Endothelial cell of umbilical vein (primary cell): ENCODE measurements at regions of chr5 and their contacts with region 1.

Region 1: GRCh38 chr5:147369742-147370374 is 135.0 kb downstream of the STK32A start:
- DNase-seq: peak; percentile 47
- H3K4me3 ChIP-seq: no peak overlapping the region
- H3K27ac ChIP-seq: no peak overlapping the region
- H3K4me1 ChIP-seq: peaks cover 8% of the 10 kb centered on the region
- H3K27me3 ChIP-seq: peaks cover 2 to 11% of the 10 kb centered on the region in 2 experiments
- CTCF ChIP-seq: peak; percentile 41 to 42
- POLR2A ChIP-seq: no peak

Region 2: GRCh38 chr5:147098233-147098790 is 271.5 kb before region 1 on chr5:
- CTCF ChIA-PET with region 1: interaction called, 100 read pairs
- POLR2A ChIA-PET with region 1: no interaction called
- dilution Hi-C with region 1: no loop called
- intact Hi-C with region 1: loop called (anchors 1 kb)
- DNase-seq: peak; percentile 23
- H3K4me3 ChIP-seq: no peak overlapping the region
- H3K27ac ChIP-seq: no peak overlapping the region
- H3K4me1 ChIP-seq: no peaks in the 10 kb centered on the region
- H3K27me3 ChIP-seq: no peaks in the 10 kb centered on the region
- CTCF ChIP-seq: peak; percentile 51 to 54
- POLR2A ChIP-seq: no peak

Region 3: GRCh38 chr5:147223948-147224791 is 145.7 kb before region 1 on chr5:
- CTCF ChIA-PET with region 1: interaction called, 234 read pairs
- POLR2A ChIA-PET with region 1: no interaction called
- dilution Hi-C with region 1: no loop called
- intact Hi-C with region 1: loop called (anchors 1 kb)
- DNase-seq: peak; percentile 60
- H3K4me3 ChIP-seq: no peak overlapping the region
- H3K27ac ChIP-seq: no peak overlapping the region
- H3K4me1 ChIP-seq: no peaks in the 10 kb centered on the region
- H3K27me3 ChIP-seq: peaks cover 4% of the 10 kb centered on the region in 2 experiments
- CTCF ChIP-seq: peak; percentile 44 to 64
- POLR2A ChIP-seq: no peak

Region 4: DNA sequence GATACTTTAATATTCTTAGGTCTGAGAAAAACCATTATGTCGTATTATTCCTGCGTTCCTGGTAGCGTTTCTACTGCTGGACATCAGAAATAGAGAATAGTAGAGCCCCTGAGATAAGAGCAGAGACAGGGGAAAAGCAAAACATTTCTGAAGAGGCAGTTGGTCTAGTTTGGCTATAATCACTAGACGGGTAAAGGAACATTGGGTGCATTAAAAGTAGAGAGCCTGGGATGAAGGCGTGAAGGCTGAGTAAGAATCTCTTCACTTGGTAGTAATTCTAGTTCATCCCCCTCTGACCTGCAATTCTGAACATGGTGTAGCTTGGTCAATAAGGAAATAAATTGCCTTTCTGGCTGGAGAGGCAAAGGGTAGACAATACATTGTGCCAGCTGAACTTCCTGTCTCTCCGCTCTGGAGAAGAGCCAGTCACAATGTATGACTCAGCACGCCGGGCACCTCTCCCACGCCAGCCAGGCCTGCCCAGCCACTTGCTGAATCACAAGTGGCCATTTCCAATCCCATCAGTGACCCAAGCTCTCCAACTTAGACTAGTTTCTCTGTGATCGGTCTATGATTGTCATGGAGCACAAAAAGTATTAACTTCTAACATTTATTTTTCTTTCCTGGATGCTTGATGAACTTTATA is 59.7 kb before region 1 on chr5:
- CTCF ChIA-PET with region 1: interaction called, 5 read pairs
- POLR2A ChIA-PET with region 1: no interaction called
- dilution Hi-C with region 1: no loop called
- intact Hi-C with region 1: loop called (anchors 2 kb)
- DNase-seq: peak; percentile 96
- H3K4me3 ChIP-seq: no peak overlapping the region
- H3K27ac ChIP-seq: peak overlapping the region; percentile 83
- H3K4me1 ChIP-seq: peaks cover 15% of the 10 kb centered on the region
- H3K27me3 ChIP-seq: no peaks in the 10 kb centered on the region
- CTCF ChIP-seq: no peak
- POLR2A ChIP-seq: no peak

Region 5: GRCh38 chr5:147382776-147383175 is 12.9 kb after region 1 on chr5:
- CTCF ChIA-PET with region 1: interaction called, 24 read pairs
- POLR2A ChIA-PET with region 1: no interaction called
- dilution Hi-C with region 1: no loop called
- intact Hi-C with region 1: no loop called
- DNase-seq: no peak
- H3K4me3 ChIP-seq: no peak overlapping the region
- H3K27ac ChIP-seq: no peak overlapping the region
- H3K4me1 ChIP-seq: no peaks in the 10 kb centered on the region
- H3K27me3 ChIP-seq: peaks cover 0 to 4% of the 10 kb centered on the region in 2 experiments
- CTCF ChIP-seq: no peak
- POLR2A ChIP-seq: no peak

Region 6: DNA sequence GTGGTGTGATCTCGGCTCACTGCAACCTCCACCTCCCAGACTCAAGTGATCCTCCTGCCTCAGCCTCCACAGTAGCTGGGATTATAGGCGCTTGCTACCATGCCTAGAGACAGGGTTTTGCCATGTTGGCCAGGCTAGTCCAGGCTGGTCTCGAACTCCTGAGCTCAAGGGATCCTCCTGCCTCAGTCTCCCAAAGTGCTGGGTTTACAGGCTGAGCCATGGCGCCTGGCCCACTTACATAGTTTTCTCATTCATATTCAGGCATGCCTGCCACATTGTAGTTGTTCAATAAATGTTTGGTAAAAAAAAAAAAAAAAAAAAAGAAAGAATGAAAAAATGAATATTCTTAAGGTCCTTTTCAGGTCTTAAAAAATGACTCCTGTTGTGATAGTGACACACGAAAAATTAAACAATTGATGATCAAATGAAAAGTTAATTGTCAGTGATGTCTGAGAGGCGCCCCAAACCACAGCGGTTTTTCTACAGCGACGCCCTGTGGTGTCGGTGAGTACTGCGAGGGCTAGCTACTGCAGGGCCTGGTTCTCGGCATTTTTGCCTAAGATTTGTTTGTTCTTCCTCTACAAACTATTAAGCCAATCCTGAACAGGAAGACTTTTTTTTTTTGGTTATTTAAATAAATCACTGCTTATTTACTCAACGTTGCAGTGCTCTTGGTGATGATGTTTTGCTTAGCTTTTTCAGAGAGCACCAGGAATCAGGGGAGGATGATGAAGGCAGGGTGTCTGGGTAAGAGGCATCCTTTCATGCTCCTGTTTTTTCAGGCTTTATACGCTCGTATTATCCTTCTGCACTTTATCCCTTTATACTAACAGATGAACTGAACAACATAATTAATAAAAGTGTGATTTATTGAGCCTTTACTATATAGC is 207.0 kb after region 1 on chr5:
- CTCF ChIA-PET with region 1: interaction called, 144 read pairs
- POLR2A ChIA-PET with region 1: no interaction called
- dilution Hi-C with region 1: no loop called
- intact Hi-C with region 1: loop called (anchors 1 kb)
- DNase-seq: peak; percentile 45
- H3K4me3 ChIP-seq: no peak overlapping the region
- H3K27ac ChIP-seq: no peak overlapping the region
- H3K4me1 ChIP-seq: no peaks in the 10 kb centered on the region
- H3K27me3 ChIP-seq: no peaks in the 10 kb centered on the region
- CTCF ChIP-seq: peak; percentile 86 to 92
- POLR2A ChIP-seq: no peak